Activated T-helper 1 cell treated with anti-CD3 and anti-CD28 coated beads, Interleukin-12 subunit alpha, Interleukin-12 subunit beta, Interleukin-2, Interleukin-4 antibody, amounts not matched to agents 30 ng/mL and 10 ng/mL and 1 ng/mL, durations not matched to agents 14 hours and 24 hours and 36 hours (primary cell): ENCODE measurements at regions of chr5 and their contacts with region 1.

Region 1: DNA sequence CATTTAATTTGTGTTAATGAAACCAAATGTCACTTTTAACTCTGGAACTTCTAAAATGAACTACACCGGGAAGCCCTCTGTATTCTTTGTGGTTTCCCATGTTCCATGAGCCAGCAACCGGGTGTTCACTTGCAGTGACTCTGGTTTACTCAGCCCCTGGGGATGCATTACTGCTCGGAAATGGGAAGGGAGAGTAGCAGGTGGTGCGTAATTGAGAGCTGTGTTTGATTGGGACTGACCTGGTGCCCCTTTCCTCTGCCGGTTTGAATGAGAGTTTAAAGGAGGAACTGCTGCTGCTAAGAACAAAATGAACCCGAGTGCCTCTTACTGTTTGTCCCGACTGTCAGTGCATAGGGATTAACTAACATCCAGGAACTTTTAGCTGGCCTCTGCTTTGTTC is 100.1 kb upstream of the DHFR start:
- DNase-seq: peak; percentile 16
- H3K4me3 Mint-ChIP-seq: peak overlapping the region; percentile 68
- H3K27ac Mint-ChIP-seq: peak overlapping the region; percentile 97
- H3K4me1 Mint-ChIP-seq: peaks cover 58% of the 10 kb centered on the region
- H3K27me3 Mint-ChIP-seq: no peaks in the 10 kb centered on the region

Region 2: DNA sequence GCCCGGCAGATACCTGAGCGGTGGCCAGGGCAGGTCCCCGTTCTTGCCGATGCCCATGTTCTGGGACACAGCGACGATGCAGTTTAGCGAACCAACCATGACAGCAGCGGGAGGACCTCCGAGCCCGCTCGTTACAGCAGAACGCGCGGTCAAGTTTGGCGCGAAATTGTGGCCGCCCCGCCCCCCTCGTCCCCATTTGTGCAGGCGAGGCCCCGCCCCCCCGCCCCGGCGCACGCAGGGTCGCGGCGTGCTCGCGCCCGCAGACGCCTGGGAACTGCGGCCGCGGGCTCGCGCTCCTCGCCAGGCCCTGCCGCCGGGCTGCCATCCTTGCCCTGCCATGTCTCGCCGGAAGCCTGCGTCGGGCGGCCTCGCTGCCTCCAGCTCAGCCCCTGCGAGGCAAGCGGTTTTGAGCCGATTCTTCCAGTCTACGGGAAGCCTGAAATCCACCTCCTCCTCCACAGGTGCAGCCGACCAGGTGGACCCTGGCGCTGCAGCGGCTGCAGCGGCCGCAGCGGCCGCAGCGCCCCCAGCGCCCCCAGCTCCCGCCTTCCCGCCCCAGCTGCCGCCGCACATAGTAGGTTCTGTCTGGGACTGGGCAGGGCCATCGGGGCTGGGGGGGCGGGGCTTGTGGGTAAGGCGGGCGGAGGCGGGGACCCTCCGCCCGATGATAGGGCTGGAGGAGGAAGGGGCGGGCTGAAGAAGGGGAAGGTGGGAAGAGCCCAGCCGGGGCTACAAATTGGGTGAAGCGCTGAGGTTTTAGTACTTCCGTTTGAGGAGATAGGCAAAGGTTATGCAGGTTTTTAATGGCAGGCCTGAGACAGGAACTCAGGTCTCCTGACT is 100.3 kb before region 1 on chr5 and contains the starts of genes DHFR and MSH3:
- intact Hi-C with region 1: loop called (anchors 1 kb)
- DNase-seq: peak; percentile 84
- H3K4me3 Mint-ChIP-seq: peak within 1 kb of the TSS; percentile 93
- H3K27ac Mint-ChIP-seq: peak within 1 kb of the TSS; percentile 98
- H3K4me1 Mint-ChIP-seq: peaks cover 37% of the 10 kb centered on the region
- H3K27me3 Mint-ChIP-seq: no peaks in the 10 kb centered on the region
- total RNA-seq, gene DHFR: 55.9 and 60.3 TPM in 2 replicates
- total RNA-seq, gene MSH3: 20.2 and 20.7 TPM in 2 replicates

Region 3: GRCh38 chr5:80793354-80793753 is 38.5 kb after region 1 on chr5:
- intact Hi-C with region 1: loop called (anchors 2 kb)
- DNase-seq: no peak
- H3K4me3 Mint-ChIP-seq: no peak overlapping the region
- H3K27ac Mint-ChIP-seq: no peak overlapping the region
- H3K4me1 Mint-ChIP-seq: peaks cover 17% of the 10 kb centered on the region
- H3K27me3 Mint-ChIP-seq: no peaks in the 10 kb centered on the region

Region 4: GRCh38 chr5:80960531-80961375 is 205.9 kb after region 1 on chr5:
- intact Hi-C with region 1: loop called (anchors 1 kb)
- DNase-seq: peak; percentile 20
- H3K4me3 Mint-ChIP-seq: peak overlapping the region; percentile 90
- H3K27ac Mint-ChIP-seq: peak overlapping the region; percentile 86
- H3K4me1 Mint-ChIP-seq: peaks cover 60% of the 10 kb centered on the region
- H3K27me3 Mint-ChIP-seq: no peaks in the 10 kb centered on the region

Region 5: DNA sequence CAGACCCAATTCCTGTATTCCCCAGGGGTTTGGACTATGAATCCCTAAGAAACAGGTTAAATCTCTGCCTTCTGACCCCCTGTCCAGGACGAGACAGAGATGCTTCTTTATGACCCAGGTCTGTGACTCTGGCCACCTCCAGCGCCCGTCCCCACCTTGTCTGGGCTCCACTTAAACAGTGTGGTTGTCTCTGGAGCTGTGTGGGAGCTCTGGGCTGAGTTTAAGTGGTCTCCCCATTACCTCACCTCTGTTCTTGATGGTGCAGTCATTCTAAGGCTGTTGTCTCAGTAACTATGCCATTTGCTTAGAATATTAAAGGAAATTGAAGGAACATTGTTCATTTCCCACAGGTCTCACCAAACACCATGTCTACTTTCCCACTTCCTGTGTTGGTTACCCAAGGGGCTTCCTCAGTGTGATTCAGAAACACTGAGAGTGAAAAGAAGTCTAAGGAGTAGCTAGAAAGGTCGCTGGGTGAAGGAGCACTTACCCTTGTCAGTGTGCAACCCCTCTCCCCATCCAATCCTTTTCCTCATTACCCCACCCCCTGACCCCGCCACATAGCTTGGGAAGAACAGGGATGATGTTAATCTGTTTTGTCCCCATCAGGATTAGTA is 350.5 kb after region 1 on chr5:
- intact Hi-C with region 1: loop called (anchors 1 kb)
- DNase-seq: no peak
- H3K4me3 Mint-ChIP-seq: peak overlapping the region; percentile 15
- H3K27ac Mint-ChIP-seq: no peak overlapping the region
- H3K4me1 Mint-ChIP-seq: peaks cover 32% of the 10 kb centered on the region
- H3K27me3 Mint-ChIP-seq: no peaks in the 10 kb centered on the region